Thyroid gland (tissue), 4 donors: ENCODE measurements at regions of chr22 and their contacts with region 1.

Region 1: GRCh38 chr22:32528984-32529982 is 54.7 kb downstream of the FBXO7 start:
- DNase-seq: peak; percentile 84 to 85
- H3K4me3 ChIP-seq: no peak overlapping the region
- H3K27ac ChIP-seq: peak overlapping the region; percentile 54 to 73 (median 57)
- H3K4me1 ChIP-seq: peaks cover 6 to 38% of the 10 kb centered on the region in 2 donors
- H3K27me3 ChIP-seq: no peaks in the 10 kb centered on the region
- CTCF ChIP-seq: peak; percentile 62 to 89 (median 81)
- POLR2A ChIP-seq: no peak

Region 2: DNA sequence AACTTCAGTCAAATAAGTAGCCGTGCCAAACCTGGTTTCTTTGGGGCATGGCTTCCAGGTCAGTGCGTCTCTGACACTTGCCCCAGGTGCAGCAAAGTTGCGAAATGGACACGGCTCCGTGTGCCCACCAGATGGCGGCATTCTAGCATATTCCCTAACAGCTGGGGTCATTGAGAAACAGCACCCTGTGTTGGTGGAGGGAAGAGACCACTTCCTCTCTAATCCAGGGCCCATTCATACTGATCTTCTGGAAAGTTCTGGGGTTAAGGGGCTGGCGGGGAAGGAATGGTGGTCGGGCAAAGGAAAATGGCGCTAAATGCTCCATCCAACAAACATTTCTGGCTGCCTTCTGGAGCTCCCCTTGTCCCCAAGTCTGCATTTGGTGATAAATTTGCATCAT is 131.0 kb after region 1 on chr22:
- intact Hi-C with region 1: loop called (anchors 5 kb)
- DNase-seq: peak; percentile 73 to 74
- H3K4me3 ChIP-seq: no peak overlapping the region
- H3K27ac ChIP-seq: no peak overlapping the region
- H3K4me1 ChIP-seq: peaks cover 0 to 7% of the 10 kb centered on the region in 2 donors
- H3K27me3 ChIP-seq: no peaks in the 10 kb centered on the region
- CTCF ChIP-seq: peak in 5 of 6 experiments; percentile 65 to 85 (median 76)
- POLR2A ChIP-seq: no peak

Region 3: GRCh38 chr22:32796865-32797573 is 267.7 kb after region 1 on chr22:
- intact Hi-C with region 1: loop called (anchors 2 kb)
- DNase-seq: peak; percentile 66 to 70
- H3K4me3 ChIP-seq: no peak overlapping the region
- H3K27ac ChIP-seq: no peak overlapping the region
- H3K4me1 ChIP-seq: peaks cover 6 to 16% of the 10 kb centered on the region in 2 donors
- H3K27me3 ChIP-seq: no peaks in the 10 kb centered on the region
- CTCF ChIP-seq: peak; percentile 69 to 92 (median 83)
- POLR2A ChIP-seq: no peak

Region 4: DNA sequence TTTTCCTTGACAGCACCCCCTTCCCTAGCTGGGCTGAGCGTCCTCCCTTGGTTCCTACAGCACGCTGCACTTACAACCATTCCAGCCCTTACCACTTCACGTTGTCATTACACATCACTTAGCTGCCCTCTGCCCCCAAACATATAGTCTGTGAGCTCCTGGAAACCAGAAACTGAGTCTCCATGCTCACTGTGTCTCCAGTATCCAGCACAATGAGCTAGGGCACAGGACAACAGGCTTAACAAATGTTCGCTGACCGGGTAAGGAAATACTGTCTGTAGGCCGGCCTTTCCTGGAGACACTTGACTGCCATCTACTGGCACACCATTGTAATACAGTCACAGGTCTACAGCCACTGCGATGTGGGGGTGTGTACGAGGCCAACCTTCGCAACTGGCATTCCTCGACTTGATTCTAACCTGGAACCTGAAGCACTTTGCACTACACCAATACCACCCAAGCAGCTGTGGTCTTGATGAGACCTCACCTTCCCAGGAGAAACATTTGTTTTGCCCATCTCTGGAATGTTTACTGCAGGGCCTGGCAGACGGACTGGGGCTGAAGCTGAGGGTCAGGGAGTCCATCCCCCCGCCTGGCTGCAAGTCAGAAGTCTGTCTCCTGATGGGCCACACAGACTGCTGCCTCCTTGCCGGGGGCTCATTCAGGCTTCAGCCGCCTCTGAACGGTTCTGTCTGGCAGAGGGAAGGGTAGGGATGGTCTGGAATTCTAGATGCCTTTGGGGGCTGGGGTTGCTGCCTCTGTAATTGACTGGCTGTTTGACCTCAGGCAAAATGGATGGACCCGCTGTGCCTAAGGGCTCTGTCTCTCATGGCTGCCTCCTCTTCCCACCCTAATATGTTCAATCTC is 456.8 kb after region 1 on chr22:
- intact Hi-C with region 1: loop called (anchors 5 kb)
- DNase-seq: peak; percentile 74 to 75
- H3K4me3 ChIP-seq: no peak overlapping the region
- H3K27ac ChIP-seq: no peak overlapping the region
- H3K4me1 ChIP-seq: peaks cover 3 to 4% of the 10 kb centered on the region in 2 donors
- H3K27me3 ChIP-seq: no peaks in the 10 kb centered on the region
- CTCF ChIP-seq: peak; percentile 79 to 95 (median 90)
- POLR2A ChIP-seq: no peak

Region 5: DNA sequence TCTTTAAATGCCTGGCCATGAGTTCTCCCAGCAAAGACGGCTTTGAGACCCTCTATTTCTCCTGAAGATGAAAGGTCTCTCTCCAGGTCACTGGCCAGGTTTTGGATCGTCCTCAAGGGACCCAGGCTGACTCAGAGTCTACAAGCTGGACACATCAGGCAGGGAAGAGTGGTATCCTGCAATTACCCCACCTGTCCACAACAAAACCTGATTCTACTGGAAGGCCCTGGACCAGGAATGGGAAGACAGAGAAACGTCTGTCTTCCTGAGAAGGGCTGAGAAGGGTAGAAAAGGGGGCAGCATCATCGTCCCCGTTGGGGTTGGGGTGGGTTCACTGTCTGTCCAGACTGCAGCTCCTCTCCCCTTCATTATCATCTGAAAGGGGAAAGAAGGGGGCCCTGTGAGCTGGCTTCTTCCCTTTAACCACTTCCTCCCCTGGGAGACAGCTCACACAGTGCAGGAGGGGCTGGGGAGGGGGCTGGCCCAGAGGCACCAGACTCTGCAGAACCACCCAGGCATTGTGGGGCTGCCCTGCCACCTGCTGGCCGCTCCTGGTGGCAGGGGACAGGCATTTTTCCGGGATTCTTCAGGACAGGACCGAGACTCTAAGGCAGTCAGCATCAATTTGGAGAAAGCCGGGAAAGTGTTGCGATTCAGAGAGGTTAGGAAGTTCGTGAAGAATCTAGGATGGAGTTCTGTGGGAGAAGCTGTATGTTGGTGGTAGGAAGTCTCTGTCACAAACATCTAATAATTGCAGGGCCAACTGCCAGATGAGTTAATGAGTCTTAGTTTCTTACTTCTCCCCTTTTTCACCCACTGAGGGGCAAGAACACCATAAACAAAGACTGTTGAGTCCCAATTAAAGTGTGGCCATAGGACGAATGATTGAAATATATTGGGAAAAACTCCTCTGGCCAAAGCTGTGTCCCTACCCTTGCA is 471.3 kb after region 1 on chr22:
- intact Hi-C with region 1: loop called (anchors 2 kb)
- DNase-seq: peak; percentile 48 to 56
- H3K4me3 ChIP-seq: no peak overlapping the region
- H3K27ac ChIP-seq: no peak overlapping the region
- H3K4me1 ChIP-seq: peaks cover 0 to 4% of the 10 kb centered on the region in 2 donors
- H3K27me3 ChIP-seq: no peaks in the 10 kb centered on the region
- CTCF ChIP-seq: peak; percentile 71 to 90 (median 78)
- POLR2A ChIP-seq: no peak